Panc1 (cell line): ENCODE measurements at regions of chr1 and their contacts with region 1.

Region 1: DNA sequence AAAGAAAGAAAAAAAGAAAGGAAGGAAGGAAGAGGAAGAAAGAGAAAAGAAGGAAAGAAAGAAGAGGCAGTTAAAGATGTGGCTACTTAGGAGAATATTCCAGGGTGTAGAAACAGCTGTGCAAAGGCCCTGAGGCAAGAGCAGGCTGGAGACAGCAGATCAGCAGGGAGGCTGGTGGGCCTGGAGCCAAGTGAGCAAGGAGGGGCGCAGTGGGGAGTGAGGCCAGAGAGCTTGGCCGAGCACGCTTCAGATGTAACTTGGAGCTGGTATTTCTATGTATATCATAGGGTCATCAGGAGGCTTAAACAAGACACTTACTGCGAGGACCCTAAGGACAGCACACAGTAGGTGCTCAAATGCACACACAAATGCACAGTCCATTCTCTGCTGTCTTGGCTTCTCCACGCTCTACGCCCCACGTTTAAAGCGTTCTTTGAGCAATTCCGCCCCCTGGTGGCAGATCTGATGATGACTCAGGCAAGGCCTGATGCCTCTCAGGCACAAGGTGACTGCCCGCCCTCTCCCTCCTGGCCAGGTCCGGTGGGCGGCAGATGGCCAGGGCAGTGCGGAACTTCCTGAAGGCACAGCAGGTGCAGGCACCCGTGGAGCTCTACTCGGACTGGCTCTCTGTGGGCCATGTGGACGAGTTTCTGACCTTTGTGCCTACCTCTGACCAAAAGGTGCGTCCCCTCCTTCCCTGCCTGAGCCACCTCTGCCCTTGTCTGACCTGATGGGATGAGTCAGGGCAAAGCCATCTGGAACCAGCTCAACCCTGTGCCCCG is 11.9 kb upstream of the PADI3 start:
- DNase-seq: peak; percentile 87
- ATAC-seq: peak; percentile 77
- H3K4me3 ChIP-seq: no peak overlapping the region
- H3K27ac ChIP-seq: peak overlapping the region; percentile 96
- H3K4me1 ChIP-seq: peaks cover 64% of the 10 kb centered on the region
- H3K27me3 ChIP-seq: no peaks in the 10 kb centered on the region
- CTCF ChIP-seq: peak; percentile 85

Region 2: DNA sequence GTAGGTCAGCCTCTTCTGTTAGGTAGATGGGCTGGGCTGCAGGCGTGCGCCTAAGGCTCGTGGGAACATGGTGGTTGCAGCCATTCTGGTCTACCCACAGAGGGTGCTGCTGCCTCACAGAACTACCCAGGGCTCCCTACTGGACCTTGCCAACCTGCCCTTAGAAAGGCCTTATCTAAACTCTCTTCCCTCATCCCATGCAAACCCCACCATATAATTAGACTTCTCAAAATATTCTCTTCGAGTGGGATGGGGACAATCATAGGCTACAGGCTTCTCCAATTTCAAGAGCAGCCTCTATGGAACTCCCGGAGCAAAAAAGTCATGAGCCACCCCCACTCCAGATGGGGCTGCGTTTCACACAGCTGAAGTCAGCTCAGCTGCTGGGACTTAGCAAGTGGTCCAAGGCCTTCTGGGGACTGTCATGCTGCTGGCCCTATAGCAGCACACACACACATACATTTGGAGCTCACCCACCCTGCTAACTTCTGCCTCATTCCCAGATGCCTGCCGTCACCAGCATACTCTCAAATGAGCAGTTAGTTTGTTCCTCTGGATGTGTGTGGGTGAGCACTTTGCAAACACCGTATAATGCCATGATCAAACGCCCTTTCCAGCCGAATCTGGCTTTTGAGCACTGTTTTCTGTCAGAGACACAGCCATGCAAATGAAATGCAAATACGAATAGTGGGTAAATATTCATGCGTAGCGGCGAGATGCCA is 177.1 kb before region 1 on chr1:
- CTCF ChIA-PET with region 1: no interaction called
- POLR2A ChIA-PET with region 1: no interaction called
- in situ Hi-C with region 1: no loop called
- intact Hi-C with region 1: loop called (anchors 2 kb)
- DNase-seq: peak; percentile 59
- ATAC-seq: peak; percentile 99
- H3K4me3 ChIP-seq: no peak overlapping the region
- H3K27ac ChIP-seq: no peak overlapping the region
- H3K4me1 ChIP-seq: no peaks in the 10 kb centered on the region
- H3K27me3 ChIP-seq: no peaks in the 10 kb centered on the region
- CTCF ChIP-seq: peak; percentile 90

Region 3: GRCh38 chr1:17125756-17126237 is 111.2 kb before region 1 on chr1:
- CTCF ChIA-PET with region 1: interaction called, 22 read pairs
- POLR2A ChIA-PET with region 1: interaction called, 4 read pairs
- in situ Hi-C with region 1: no loop called
- intact Hi-C with region 1: loop called (anchors 1 kb)
- DNase-seq: peak; percentile 81
- ATAC-seq: peak; percentile 87
- H3K4me3 ChIP-seq: no peak overlapping the region
- H3K27ac ChIP-seq: peak overlapping the region; percentile 81
- H3K4me1 ChIP-seq: peaks cover 36% of the 10 kb centered on the region
- H3K27me3 ChIP-seq: no peaks in the 10 kb centered on the region
- CTCF ChIP-seq: peak; percentile 96

Region 4: DNA sequence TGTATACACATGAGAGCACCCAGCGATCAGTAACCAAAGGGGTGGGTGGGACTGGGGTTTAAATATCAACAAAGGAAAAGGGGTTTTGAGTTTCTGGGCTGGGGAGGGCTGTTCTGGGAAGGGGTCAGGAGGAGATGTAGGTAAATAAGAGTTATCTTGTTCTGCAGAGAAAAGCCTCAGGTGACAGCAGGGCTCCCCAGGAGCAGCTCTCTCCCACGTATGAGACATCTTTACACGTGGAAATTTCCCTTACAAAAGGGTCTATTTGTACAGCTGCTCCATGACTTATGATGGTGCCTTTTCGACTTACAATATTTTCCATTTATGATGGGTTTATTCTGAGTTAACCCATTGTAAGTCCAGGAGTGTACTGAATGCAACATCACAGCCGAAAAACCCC is 101.4 kb before region 1 on chr1:
- CTCF ChIA-PET with region 1: no interaction called
- POLR2A ChIA-PET with region 1: interaction called, 14 read pairs
- in situ Hi-C with region 1: no loop called
- intact Hi-C with region 1: no loop called
- DNase-seq: no peak
- ATAC-seq: peak; percentile 79
- H3K4me3 ChIP-seq: no peak overlapping the region
- H3K27ac ChIP-seq: peak overlapping the region; percentile 84
- H3K4me1 ChIP-seq: peaks cover 39% of the 10 kb centered on the region
- H3K27me3 ChIP-seq: no peaks in the 10 kb centered on the region
- CTCF ChIP-seq: no peak

Region 5: DNA sequence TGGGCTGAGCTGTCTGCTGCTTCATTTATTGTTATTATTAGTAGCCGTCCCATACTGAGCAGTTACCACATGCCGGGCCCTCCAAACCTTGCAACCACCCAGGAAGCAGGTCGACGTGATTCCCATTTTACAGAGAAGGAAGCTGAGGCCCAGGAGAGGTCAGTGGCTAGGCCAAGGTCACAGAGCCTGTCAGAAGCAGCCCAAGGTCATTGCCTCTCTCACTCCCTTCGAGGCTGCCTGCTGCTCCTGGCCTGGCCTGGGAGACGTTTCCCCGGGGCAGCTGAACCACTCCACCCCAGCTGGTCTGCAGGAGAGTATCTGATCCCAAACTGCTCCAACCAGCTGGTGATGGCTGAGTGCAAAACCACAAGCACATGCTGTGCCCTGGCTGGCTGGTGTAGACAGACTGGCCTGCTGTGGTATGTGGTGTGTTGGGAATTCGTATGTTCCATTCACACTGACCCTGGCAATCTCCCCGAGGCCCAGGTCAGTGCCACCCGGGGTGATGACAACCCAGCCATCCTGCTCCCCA is 77.6 kb after region 1 on chr1:
- CTCF ChIA-PET with region 1: no interaction called
- POLR2A ChIA-PET with region 1: no interaction called
- in situ Hi-C with region 1: no loop called
- intact Hi-C with region 1: no loop called
- DNase-seq: no peak
- ATAC-seq: peak; percentile 69; the same call in 1 of the 2 replicates
- H3K4me3 ChIP-seq: no peak overlapping the region
- H3K27ac ChIP-seq: no peak overlapping the region
- H3K4me1 ChIP-seq: no peaks in the 10 kb centered on the region
- H3K27me3 ChIP-seq: no peaks in the 10 kb centered on the region
- CTCF ChIP-seq: no peak

Region 6: DNA sequence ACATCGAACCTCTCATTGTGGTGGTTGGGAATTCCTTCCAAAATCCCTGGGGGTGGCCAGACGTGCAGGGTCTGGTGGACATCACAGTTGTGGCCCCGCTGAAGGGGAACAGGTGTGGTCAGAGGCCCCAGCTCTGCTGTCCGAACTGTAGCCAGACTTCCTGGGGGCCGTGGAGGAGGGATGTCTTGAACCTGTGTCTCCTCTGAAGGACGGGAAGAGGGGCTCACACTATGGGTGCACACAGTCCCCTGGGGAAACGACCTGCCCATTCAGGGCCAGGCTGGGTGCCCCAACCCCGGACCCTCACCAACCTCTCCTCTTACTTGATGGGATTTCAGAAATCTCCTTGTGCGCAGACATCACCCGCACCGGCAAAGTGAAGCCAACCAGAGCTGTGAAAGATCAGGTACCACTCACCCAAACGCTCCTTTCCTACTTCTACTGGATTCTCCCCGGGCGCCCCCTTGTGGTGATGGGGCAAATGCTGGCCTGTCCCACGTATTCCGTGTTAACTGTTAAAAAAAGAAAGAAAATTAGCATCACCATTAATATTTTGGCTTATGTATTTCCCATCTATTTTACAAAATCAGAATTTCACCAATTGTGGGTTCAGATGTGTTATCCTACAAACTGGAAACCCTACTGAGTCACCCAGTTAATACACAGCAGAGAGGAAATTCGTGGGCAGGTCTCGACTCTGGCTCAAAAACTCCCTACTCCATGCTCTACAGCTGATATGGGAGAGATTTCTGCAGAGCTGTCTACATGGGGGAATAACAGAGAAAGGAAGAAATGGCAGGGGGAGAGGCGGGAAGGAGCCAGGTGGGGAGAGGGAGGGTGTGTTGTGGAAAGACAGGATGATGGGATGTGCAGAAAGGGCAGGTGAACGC is 99.1 kb after region 1 on chr1:
- CTCF ChIA-PET with region 1: interaction called, 3 read pairs
- POLR2A ChIA-PET with region 1: no interaction called
- in situ Hi-C with region 1: no loop called
- intact Hi-C with region 1: loop called (anchors 2 kb)
- DNase-seq: peak; percentile 39
- ATAC-seq: peak; percentile 96
- H3K4me3 ChIP-seq: peak overlapping the region in 1 of 2 experiments; percentile 18; a peak in 1 of 4 replicates
- H3K27ac ChIP-seq: no peak overlapping the region; the same call in 1 of the 2 replicates
- H3K4me1 ChIP-seq: peaks cover 9% of the 10 kb centered on the region; the same call in 1 of the 2 replicates
- H3K27me3 ChIP-seq: no peaks in the 10 kb centered on the region
- CTCF ChIP-seq: peak; percentile 97

Region 7: DNA sequence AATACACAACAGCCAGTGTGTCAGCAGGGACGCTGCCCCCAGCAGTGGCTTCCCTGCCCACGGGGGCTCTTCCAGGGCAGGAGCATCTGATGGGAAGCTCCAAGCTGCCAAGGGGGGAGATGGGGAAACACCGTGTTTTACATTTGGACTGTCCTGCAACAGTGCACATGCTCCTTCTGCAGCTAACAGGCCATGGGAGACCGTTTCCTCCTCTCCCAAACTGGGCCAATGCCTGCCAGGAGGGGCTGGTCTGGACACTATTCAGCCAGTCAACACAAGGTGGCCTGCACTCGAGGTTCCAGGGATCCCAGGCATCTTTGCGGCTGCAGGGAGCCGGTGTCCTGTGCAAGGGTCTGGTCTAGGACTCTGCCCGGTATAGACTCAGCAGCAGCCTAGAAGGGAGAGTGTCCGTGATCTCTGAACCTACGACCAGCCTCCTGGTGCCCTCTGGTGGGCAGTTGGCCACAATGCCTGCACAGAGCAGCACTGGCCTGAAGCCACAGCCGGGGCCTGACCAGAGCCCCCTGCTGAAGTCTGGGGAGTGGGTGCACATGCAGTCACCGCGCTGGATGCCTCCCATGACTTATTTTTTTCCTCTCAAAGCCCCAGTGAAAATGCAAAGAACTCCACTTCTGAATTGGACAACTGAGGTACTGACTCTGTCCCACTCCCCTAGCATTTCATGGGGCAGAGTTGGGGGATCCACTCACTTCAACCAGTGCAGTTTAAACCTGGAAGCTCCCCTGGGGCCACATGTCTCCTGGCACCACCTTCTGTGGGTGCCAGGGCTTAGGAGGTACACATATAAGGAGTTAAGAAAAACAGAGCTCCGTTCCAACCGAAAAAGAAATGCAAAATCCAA is 169.2 kb after region 1 on chr1:
- CTCF ChIA-PET with region 1: no interaction called
- POLR2A ChIA-PET with region 1: no interaction called
- in situ Hi-C with region 1: no loop called
- intact Hi-C with region 1: loop called (anchors 10 kb)
- DNase-seq: peak; percentile 45
- ATAC-seq: peak; percentile 91
- H3K4me3 ChIP-seq: no peak overlapping the region
- H3K27ac ChIP-seq: peak overlapping the region; percentile 48; the same call in 1 of the 2 replicates
- H3K4me1 ChIP-seq: peaks cover 18% of the 10 kb centered on the region
- H3K27me3 ChIP-seq: no peaks in the 10 kb centered on the region
- CTCF ChIP-seq: peak; percentile 91

Region 8: DNA sequence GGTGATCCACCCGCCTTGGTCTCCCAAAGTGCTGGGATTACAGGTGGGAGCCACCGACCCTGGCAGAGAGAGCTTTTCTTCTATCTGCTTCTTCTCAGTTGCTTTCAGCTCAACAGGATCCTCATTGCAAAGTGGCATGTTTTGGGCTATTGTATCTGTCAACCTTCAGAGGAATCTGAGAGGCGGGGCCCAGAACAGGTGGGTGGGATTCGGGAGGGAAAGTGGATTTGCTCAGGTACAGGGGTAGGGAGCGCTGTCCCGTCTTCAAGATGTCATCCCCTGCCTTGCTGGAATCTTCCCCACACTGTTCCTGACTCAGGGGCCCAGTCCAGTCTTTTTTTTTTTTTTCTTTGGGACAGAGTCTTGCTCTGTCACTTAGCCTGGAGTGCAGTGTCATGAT is 229.4 kb after region 1 on chr1:
- CTCF ChIA-PET with region 1: interaction called, 14 read pairs
- POLR2A ChIA-PET with region 1: no interaction called
- in situ Hi-C with region 1: no loop called
- intact Hi-C with region 1: no loop called
- DNase-seq: no peak
- ATAC-seq: no peak
- H3K4me3 ChIP-seq: no peak overlapping the region
- H3K27ac ChIP-seq: no peak overlapping the region
- H3K4me1 ChIP-seq: no peaks in the 10 kb centered on the region
- H3K27me3 ChIP-seq: no peaks in the 10 kb centered on the region
- CTCF ChIP-seq: no peak

Region 9: DNA sequence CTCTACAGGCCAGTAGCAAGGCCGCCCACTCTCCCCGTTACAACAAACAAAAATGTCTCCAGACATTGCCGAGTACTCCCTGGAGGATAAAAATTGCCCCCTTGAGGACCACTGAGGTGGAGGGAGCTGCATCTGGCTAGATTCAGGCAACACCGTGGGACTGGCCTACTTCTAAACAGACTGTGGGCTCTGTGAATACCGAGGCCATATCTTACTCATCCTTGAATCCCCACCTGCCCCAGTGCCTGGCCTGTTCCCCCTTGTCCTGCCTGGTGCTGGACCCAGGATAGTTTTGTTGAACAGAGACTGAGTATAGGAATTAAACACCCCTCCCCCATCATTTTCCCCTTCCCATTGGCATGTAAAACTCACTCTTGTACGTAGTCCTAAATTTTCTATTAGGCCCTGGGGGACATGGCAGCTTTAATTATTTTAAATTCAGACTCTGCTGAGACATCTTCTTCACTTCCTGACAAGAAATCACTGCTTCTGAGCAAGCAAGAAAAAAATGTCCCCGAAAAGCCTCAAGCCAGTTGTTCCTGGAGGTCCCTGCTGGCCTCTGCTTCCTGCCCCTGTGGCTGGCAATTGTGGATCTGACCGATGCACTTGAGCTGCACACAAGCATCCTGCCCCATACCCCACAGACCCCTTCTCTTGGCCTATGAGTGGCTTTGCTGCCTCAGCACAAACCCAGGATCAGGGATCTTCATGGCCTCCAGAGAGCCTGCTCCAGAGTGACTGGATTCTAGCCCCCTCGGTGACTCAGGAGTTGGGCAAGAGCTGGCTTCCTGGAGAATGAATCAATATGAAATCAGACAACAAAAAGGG is 629.2 kb after region 1 on chr1:
- CTCF ChIA-PET with region 1: no interaction called
- POLR2A ChIA-PET with region 1: no interaction called
- in situ Hi-C with region 1: no loop called
- intact Hi-C with region 1: no loop called
- DNase-seq: no peak
- ATAC-seq: no peak
- H3K4me3 ChIP-seq: no peak overlapping the region
- H3K27ac ChIP-seq: no peak overlapping the region
- H3K4me1 ChIP-seq: no peaks in the 10 kb centered on the region
- H3K27me3 ChIP-seq: no peaks in the 10 kb centered on the region
- CTCF ChIP-seq: no peak